ENCODE measurements at regions of chr6 and their contacts with region 1.

Region 1: DNA sequence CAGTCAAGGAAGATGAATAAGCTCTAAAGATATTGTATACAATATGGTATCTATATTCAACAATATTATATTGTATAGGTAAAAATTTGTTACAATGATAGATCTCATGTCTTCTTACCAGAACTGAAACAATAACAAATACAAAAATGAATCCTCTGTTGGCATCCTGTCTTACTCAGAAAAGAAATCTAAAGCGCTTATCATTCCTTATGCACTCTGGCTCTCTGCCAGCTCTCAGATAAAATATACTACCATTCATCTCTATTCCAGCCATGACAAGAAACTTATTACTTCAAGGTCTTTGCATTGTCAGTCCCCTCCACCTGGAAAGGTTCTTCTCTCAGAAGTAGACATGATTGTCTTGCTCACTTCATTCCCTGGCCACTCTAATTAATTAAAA is 138.6 kb downstream of the THEMIS start:
- DNase-seq: peak; percentile 58
- H3K4me3 Mint-ChIP-seq: no peak overlapping the region
- H3K27ac Mint-ChIP-seq: peak overlapping the region; percentile 12
- H3K4me1 Mint-ChIP-seq: peaks cover 58% of the 10 kb centered on the region
- H3K27me3 Mint-ChIP-seq: no peaks in the 10 kb centered on the region

Region 2: GRCh38 chr6:127748290-127748689 is 14.0 kb before region 1 on chr6:
- CTCF ChIA-PET with region 1: no interaction called
- intact Hi-C with region 1: loop called (anchors 1 kb)
- DNase-seq: no peak
- H3K4me3 Mint-ChIP-seq: peak overlapping the region; percentile 62
- H3K27ac Mint-ChIP-seq: peak overlapping the region; percentile 83
- H3K4me1 Mint-ChIP-seq: peaks cover 61% of the 10 kb centered on the region
- H3K27me3 Mint-ChIP-seq: no peaks in the 10 kb centered on the region

Region 3: DNA sequence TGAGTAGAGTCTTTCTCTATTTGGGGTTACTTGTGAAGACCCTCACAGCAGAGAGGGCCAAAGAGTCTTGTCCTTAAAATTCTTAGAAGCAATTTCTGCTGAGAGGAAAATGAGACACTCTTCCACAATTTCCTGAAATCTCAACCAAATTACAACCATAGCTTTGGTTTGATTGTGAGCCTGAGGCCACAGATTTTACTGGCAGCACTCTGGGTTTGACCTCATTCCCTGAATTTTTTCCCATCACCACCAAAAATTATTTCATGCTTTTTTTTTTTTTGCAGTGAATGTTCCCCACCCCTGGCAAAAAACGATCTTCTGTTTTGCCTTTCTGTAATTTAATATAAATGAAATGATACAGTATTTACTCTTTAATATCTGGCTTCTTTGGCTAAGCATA is 13.1 kb after region 1 on chr6:
- CTCF ChIA-PET with region 1: interaction called, 7 read pairs
- intact Hi-C with region 1: loop called (anchors 1 kb)
- DNase-seq: no peak
- H3K4me3 Mint-ChIP-seq: no peak overlapping the region
- H3K27ac Mint-ChIP-seq: peak overlapping the region; percentile 72
- H3K4me1 Mint-ChIP-seq: peaks cover 59% of the 10 kb centered on the region
- H3K27me3 Mint-ChIP-seq: no peaks in the 10 kb centered on the region

Region 4: GRCh38 chr6:127824061-127824460 is 61.8 kb after region 1 on chr6:
- CTCF ChIA-PET with region 1: no interaction called
- intact Hi-C with region 1: loop called (anchors 2 kb)
- DNase-seq: no peak
- H3K4me3 Mint-ChIP-seq: no peak overlapping the region
- H3K27ac Mint-ChIP-seq: no peak overlapping the region
- H3K4me1 Mint-ChIP-seq: peaks cover 56% of the 10 kb centered on the region
- H3K27me3 Mint-ChIP-seq: no peaks in the 10 kb centered on the region

Region 5: DNA sequence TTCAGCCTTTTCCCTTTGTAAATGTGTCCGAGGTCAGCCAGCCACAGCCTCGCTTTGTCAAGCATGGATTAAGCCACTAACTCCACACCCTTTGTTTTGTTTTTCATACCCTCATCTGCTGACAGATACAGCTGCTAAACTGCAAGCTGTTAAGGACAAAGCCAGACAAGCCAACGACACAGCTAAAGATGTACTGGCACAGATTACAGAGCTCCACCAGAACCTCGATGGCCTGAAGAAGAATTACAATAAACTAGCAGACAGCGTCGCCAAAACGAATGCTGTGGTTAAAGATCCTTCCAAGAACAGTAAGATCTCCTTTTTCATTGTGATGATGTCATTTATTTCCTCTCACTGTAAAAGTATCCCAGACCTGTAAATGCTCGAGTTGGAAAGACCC is 1678.4 kb after region 1 on chr6:
- CTCF ChIA-PET with region 1: no interaction called
- intact Hi-C with region 1: loop called (anchors 10 kb)
- DNase-seq: peak; percentile 17
- H3K4me3 Mint-ChIP-seq: no peak overlapping the region
- H3K27ac Mint-ChIP-seq: no peak overlapping the region
- H3K4me1 Mint-ChIP-seq: peaks cover 21% of the 10 kb centered on the region
- H3K27me3 Mint-ChIP-seq: no peaks in the 10 kb centered on the region

Measured in activated naive CD4-positive, alpha-beta T cell treated with anti-CD3 and anti-CD28 coated beads for 36 hours (primary cell).